Gastrocnemius medialis (tissue), 4 donors: ENCODE measurements at regions of chr19 and their contacts with region 1.

Region 1: GRCh38 chr19:2461751-2462634 is 5.2 kb upstream of the LMNB2 start:
- DNase-seq: no peak
- ATAC-seq: peak in 1 of 2 donors; percentile 36
- H3K4me3 ChIP-seq: peak overlapping the region; percentile 57 to 86 (median 68)
- H3K27ac ChIP-seq: peak overlapping the region in 1 of 4 donors; percentile 29
- H3K4me1 ChIP-seq: peaks cover 3 to 16% of the 10 kb centered on the region in 2 donors
- H3K27me3 ChIP-seq: no peaks in the 10 kb centered on the region
- CTCF ChIP-seq: peak in 1 of 5 experiments; percentile 30
- POLR2A ChIP-seq: no peak

Region 2: DNA sequence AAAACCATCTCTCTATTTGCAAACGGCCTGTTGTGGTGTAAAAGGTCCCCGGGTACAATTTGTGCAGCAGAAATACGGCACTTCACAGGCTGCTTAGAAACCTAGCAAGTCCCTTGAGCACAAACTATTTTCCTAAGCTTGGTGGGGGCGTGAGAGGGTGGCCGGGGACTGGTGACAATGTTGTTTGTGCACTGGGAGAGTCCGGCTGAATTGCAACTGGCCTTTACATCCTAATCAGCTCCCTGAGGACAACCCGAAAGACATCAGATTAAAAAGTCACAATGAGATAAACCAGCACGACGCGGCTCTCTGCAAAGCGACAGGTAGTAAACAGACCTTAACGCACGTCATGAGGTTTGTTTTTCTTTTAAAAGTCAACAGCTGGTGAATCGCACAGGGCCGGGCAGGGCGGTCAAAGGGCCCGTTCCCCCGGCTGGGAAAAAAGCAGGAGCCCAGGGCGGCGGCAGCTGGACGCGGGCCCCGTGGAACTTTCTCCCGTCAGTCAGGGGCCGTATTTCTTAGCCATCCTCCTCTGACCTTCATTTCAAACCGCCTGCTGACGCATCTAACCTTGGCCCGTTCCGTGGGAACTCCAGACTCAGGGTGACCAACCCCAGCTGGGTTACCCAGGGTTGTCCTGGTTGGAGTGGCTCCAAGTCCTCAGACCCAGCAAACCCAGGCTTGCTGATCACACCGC is 126.2 kb after region 1 on chr19:
- in situ Hi-C with region 1: loop called in 2 of 4 experiments (anchors 10 kb)
- intact Hi-C with region 1: no loop called
- DNase-seq: no peak
- ATAC-seq: peak; percentile 68 to 80
- H3K4me3 ChIP-seq: peak overlapping the region in 1 of 4 donors; percentile 17
- H3K27ac ChIP-seq: peak overlapping the region; percentile 63 to 78 (median 70)
- H3K4me1 ChIP-seq: peaks cover 0 to 3% of the 10 kb centered on the region in 2 donors
- H3K27me3 ChIP-seq: no peaks in the 10 kb centered on the region
- CTCF ChIP-seq: no peak
- POLR2A ChIP-seq: no peak

Region 3: GRCh38 chr19:2610637-2611482 is 148.9 kb after region 1 on chr19:
- in situ Hi-C with region 1: loop called in 1 of 4 experiments (anchors 10 kb)
- intact Hi-C with region 1: no loop called
- DNase-seq: peak; percentile 80 to 83
- ATAC-seq: peak; percentile 95 to 96
- H3K4me3 ChIP-seq: peak overlapping the region; percentile 52 to 88 (median 64)
- H3K27ac ChIP-seq: peak overlapping the region; percentile 72 to 84 (median 84)
- H3K4me1 ChIP-seq: no peaks in the 10 kb centered on the region
- H3K27me3 ChIP-seq: no peaks in the 10 kb centered on the region
- CTCF ChIP-seq: peak; percentile 94 to 99 (median 99)
- POLR2A ChIP-seq: peak in 1 of 2 donors; percentile 13